Endothelial cell of umbilical vein (primary cell): ENCODE measurements at regions of chr4 and their contacts with region 1.

Region 1: DNA sequence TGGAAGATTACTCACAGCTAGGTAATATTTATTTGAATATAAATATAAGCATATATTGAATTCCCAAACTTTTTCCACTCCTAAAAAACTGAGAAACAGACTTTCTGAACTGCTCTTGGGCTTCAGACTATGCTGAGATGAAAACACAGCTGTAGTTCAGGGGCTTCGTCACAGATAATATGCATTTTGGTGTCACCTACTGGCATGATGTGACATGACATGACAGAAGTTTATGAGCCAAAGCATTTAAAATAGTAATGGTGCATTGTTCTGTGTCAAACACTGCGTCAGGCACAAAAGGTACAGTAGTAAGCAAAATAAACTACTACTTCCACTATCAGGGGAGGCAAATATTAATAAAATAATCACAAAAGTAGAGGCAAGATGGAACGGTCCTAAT is 171.3 kb downstream of the BTC start:
- DNase-seq: peak; percentile 79
- H3K4me3 ChIP-seq: no peak overlapping the region
- H3K27ac ChIP-seq: peak overlapping the region; percentile 98
- H3K4me1 ChIP-seq: peaks cover 87% of the 10 kb centered on the region
- H3K27me3 ChIP-seq: no peaks in the 10 kb centered on the region
- CTCF ChIP-seq: peak; percentile 39 to 46
- POLR2A ChIP-seq: no peak

Region 2: GRCh38 chr4:74320559-74321118 is 302.4 kb before region 1 on chr4:
- CTCF ChIA-PET with region 1: interaction called, 22 read pairs
- POLR2A ChIA-PET with region 1: no interaction called
- dilution Hi-C with region 1: no loop called
- intact Hi-C with region 1: loop called (anchors 1 kb)
- DNase-seq: peak; percentile 74
- H3K4me3 ChIP-seq: no peak overlapping the region
- H3K27ac ChIP-seq: no peak overlapping the region
- H3K4me1 ChIP-seq: no peaks in the 10 kb centered on the region
- H3K27me3 ChIP-seq: no peaks in the 10 kb centered on the region
- CTCF ChIP-seq: peak; percentile 44
- POLR2A ChIP-seq: no peak

Region 3: GRCh38 chr4:74444891-74445642 is 178.0 kb before region 1 on chr4 and contains the start of gene AREG:
- CTCF ChIA-PET with region 1: interaction called, 11 read pairs
- POLR2A ChIA-PET with region 1: no interaction called
- dilution Hi-C with region 1: no loop called
- intact Hi-C with region 1: loop called (anchors 1 kb)
- DNase-seq: peak; percentile 70
- H3K4me3 ChIP-seq: peak within 1 kb of the TSS; percentile 8 to 73 (median 45)
- H3K27ac ChIP-seq: no peak within 1 kb of the TSS
- H3K4me1 ChIP-seq: peaks cover 3% of the 10 kb centered on the region
- H3K27me3 ChIP-seq: no peaks in the 10 kb centered on the region
- CTCF ChIP-seq: peak; percentile 62
- POLR2A ChIP-seq: no peak
- total RNA-seq, gene AREG: 0.46 and 0.55 TPM in 2 replicates

Region 4: GRCh38 chr4:74531963-74532794 is 90.9 kb before region 1 on chr4:
- CTCF ChIA-PET with region 1: interaction called, 57 read pairs
- POLR2A ChIA-PET with region 1: no interaction called
- dilution Hi-C with region 1: no loop called
- intact Hi-C with region 1: loop called (anchors 1 kb)
- DNase-seq: peak; percentile 87
- H3K4me3 ChIP-seq: no peak overlapping the region
- H3K27ac ChIP-seq: no peak overlapping the region
- H3K4me1 ChIP-seq: no peaks in the 10 kb centered on the region
- H3K27me3 ChIP-seq: no peaks in the 10 kb centered on the region
- CTCF ChIP-seq: peak; percentile 53 to 60
- POLR2A ChIP-seq: no peak

Region 5: DNA sequence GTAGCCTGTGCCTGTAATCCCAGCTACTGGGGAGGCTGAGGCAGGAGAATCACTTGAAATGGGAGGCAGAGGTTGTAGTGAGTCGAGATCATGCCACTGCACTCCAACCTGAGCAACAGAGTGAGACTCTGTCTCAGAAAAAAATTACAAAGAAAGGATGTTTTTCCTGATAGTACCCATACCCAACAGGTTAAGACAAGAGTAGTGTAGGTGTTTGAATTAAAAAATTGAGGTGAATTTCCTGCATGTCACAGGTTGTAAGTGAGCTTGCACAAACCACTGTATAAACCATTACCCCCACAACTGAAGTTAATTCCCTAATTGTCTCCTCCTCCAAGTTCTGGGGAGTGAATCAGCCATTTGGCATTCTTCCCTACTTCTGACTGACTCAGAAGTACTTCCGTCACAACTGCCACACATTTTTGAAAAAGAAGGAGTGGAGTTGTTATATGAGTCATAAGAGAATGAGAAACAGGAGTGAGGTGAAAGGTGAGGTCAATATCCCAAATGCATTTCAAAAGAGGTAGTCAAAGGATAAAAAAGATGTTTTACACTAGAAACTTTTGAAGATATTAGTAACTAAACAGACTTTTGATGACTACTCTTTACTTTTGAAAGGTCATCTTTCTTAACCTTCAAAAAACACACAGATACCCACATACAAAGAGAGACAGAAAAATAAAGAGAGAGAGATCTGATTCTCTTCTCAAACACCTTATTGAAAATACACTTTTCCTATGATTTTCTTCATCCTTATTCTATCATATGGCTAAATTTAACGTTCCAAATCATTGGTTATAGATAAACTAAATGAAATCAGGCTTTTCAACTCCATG is 36.8 kb after region 1 on chr4:
- CTCF ChIA-PET with region 1: interaction called, 5 read pairs
- POLR2A ChIA-PET with region 1: no interaction called
- dilution Hi-C with region 1: no loop called
- intact Hi-C with region 1: loop called (anchors 1 kb)
- DNase-seq: peak; percentile 98
- H3K4me3 ChIP-seq: no peak overlapping the region
- H3K27ac ChIP-seq: peak overlapping the region; percentile 26
- H3K4me1 ChIP-seq: peaks cover 9% of the 10 kb centered on the region
- H3K27me3 ChIP-seq: no peaks in the 10 kb centered on the region
- CTCF ChIP-seq: no peak
- POLR2A ChIP-seq: no peak